Heart left ventricle (tissue), 16 donors: ENCODE measurements at regions of chr2 and their contacts with region 1.

Region 1: DNA sequence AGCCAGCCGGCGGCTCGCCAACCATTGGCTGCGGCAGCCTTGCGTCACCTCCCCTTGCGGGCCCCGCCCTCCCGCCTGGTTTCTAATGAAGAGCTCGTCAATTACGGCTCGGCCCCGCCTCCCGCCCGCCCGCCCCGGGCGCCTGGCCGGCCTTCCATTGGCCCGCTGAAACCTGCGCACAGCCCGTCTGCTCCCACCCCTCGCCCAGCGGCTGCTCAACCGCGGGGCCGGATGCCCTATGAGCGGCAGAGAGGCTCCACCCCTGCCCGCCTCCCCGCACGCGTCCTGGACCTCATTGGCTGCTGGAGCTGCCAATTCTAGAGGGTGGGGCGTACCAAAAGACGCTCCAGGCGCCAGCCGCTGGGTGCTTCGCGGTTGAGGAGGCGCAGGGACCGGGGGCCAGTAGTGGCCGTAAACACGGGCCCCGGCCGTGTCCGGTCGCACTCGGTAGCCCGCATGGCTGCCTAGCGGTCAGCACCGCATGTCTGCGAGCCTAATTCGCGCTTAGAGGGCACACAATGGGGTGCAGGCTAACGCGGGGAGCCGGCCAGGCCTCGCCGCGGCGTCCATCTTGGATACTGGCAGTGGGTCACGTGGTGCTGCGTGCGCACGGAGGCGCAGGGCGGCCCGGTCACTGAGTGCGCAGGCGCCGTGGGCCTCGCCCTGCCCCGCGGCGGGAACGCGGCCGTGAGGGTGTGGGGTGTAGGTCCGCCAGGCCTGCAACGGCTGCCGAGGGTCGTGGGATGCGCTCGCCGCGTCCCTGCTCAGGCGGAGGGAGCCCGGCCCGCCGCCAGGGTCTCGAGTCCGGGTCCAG is 454 bp upstream of the HDAC4 start:
- DNase-seq: peak; percentile 99 to 100 (median 99)
- ATAC-seq: peak; percentile 97 to 98 (median 98)
- H3K4me3 ChIP-seq: peak overlapping the region; percentile 32 to 91 (median 74)
- H3K27ac ChIP-seq: peak overlapping the region; percentile 94 to 100 (median 99)
- H3K4me1 ChIP-seq: peaks cover 0 to 42% (median 24%) of the 10 kb centered on the region in 12 donors
- H3K27me3 ChIP-seq: no peaks in the 10 kb centered on the region
- CTCF ChIP-seq: no peak
- POLR2A ChIP-seq: peak; percentile 31 to 94

Region 2: GRCh38 chr2:239035361-239036078 is 365.8 kb before region 1 on chr2:
- intact Hi-C with region 1: loop called in 2 of 10 experiments (anchors 2 to 10 kb)
- DNase-seq: peak in 4 of 5 donors; percentile 33 to 81 (median 44)
- ATAC-seq: peak in 3 of 4 donors; percentile 79 to 91 (median 84)
- H3K4me3 ChIP-seq: no peak overlapping the region
- H3K27ac ChIP-seq: no peak overlapping the region
- H3K4me1 ChIP-seq: peaks cover 0 to 5% (median 0%) of the 10 kb centered on the region in 12 donors
- H3K27me3 ChIP-seq: peaks cover 0 to 18% (median 0%) of the 10 kb centered on the region in 9 donors
- CTCF ChIP-seq: peak; percentile 80 to 93 (median 89)
- POLR2A ChIP-seq: no peak

Region 3: GRCh38 chr2:239157771-239158170 is 243.5 kb before region 1 on chr2:
- intact Hi-C with region 1: loop called in 1 of 10 experiments (anchors 10 kb)
- DNase-seq: peak in 3 of 5 donors; percentile 16 to 60 (median 18)
- ATAC-seq: peak in 2 of 4 donors; percentile 28 to 50
- H3K4me3 ChIP-seq: no peak overlapping the region
- H3K27ac ChIP-seq: no peak overlapping the region
- H3K4me1 ChIP-seq: peaks cover 0 to 9% (median 0%) of the 10 kb centered on the region in 12 donors
- H3K27me3 ChIP-seq: no peaks in the 10 kb centered on the region
- CTCF ChIP-seq: no peak
- POLR2A ChIP-seq: no peak

Region 4: DNA sequence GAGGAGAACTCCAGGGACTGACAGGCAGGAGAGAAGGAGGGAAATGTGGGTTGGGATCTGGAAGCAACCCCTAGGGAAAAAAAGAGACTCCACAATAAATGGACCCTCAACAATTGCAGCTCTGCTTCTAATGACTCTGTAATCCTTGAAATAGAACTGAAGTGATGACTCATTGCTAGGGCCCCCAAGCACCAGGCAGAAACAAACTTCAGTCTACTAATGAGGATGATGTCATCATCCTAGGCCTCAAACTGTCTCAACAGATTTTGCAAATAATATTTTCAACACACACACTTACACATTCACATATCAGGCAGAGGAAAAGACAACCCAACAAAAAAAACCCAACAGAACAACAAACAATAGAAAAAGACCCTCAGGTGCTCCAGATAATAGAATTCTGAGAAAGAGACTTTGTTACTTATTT is 143.8 kb before region 1 on chr2:
- intact Hi-C with region 1: loop called in 1 of 10 experiments (anchors 10 kb)
- DNase-seq: peak in 1 of 5 donors; percentile 14
- ATAC-seq: peak in 2 of 4 donors; percentile 46 to 56
- H3K4me3 ChIP-seq: no peak overlapping the region
- H3K27ac ChIP-seq: peak overlapping the region in 5 of 12 donors; percentile 20 to 88 (median 48)
- H3K4me1 ChIP-seq: peaks cover 0 to 98% (median 28%) of the 10 kb centered on the region in 12 donors
- H3K27me3 ChIP-seq: no peaks in the 10 kb centered on the region
- CTCF ChIP-seq: no peak
- POLR2A ChIP-seq: no peak

Region 5: DNA sequence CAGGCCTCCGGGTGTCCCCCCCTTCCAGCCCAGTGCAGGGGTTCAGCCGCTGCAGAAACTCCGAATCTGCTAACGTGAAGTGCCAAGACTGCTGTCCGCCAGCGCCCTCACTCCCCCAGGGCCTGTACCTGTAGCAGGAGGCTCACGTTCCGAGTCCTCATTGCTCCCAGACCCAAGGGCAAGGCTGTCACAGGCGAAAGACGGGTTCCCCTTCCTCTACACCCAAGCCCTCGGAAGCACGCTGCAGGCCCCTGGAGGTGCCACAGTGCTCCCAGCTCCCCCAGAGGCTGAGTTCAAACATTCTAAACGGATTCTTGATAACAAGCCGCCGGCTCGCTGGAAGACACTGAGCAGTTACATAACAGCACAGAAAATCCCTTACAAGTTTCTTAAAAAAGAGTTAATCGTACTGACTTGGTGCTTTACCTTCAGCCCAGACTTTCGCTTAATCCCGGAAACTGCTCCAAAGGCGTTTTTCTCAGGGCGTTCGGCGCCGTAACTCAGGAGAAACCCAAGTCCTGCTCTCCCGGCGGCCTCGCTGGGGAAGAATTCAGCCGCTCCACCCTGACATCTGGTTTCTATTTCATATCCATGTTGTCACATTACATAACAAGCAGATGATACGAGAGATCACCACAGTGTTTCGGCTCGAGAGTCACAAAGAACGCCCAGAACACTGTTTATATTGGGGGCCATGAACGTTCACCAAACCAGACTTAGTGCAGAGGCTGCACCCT is 92.4 kb before region 1 on chr2:
- intact Hi-C with region 1: loop called in 1 of 10 experiments (anchors 5 kb)
- DNase-seq: peak in 1 of 5 donors; percentile 61
- ATAC-seq: peak; percentile 19 to 52 (median 30)
- H3K4me3 ChIP-seq: peak overlapping the region; percentile 10 to 63 (median 51)
- H3K27ac ChIP-seq: peak overlapping the region; percentile 78 to 91 (median 85)
- H3K4me1 ChIP-seq: peaks cover 6 to 96% (median 71%) of the 10 kb centered on the region in 12 donors
- H3K27me3 ChIP-seq: no peaks in the 10 kb centered on the region
- CTCF ChIP-seq: peak in 5 of 12 donors; percentile 0 to 39 (median 16)
- POLR2A ChIP-seq: no peak

Region 6: GRCh38 chr2:239326831-239327535 is 74.3 kb before region 1 on chr2:
- intact Hi-C with region 1: loop called in 5 of 10 experiments (anchors 2 to 10 kb)
- DNase-seq: peak in 1 of 5 donors; percentile 16
- ATAC-seq: no peak
- H3K4me3 ChIP-seq: no peak overlapping the region
- H3K27ac ChIP-seq: peak overlapping the region in 11 of 12 donors; percentile 80 to 99 (median 91)
- H3K4me1 ChIP-seq: peaks cover 0 to 72% (median 53%) of the 10 kb centered on the region in 12 donors
- H3K27me3 ChIP-seq: no peaks in the 10 kb centered on the region
- CTCF ChIP-seq: no peak
- POLR2A ChIP-seq: no peak

Region 7: GRCh38 chr2:239461291-239462190 is 60.3 kb after region 1 on chr2:
- intact Hi-C with region 1: no loop called
- DNase-seq: no peak
- ATAC-seq: no peak
- H3K4me3 ChIP-seq: no peak overlapping the region
- H3K27ac ChIP-seq: no peak overlapping the region
- H3K4me1 ChIP-seq: peaks cover 0 to 23% (median 0%) of the 10 kb centered on the region in 12 donors
- H3K27me3 ChIP-seq: peaks cover 0 to 4% (median 0%) of the 10 kb centered on the region in 9 donors
- CTCF ChIP-seq: no peak
- POLR2A ChIP-seq: no peak

Region 8: DNA sequence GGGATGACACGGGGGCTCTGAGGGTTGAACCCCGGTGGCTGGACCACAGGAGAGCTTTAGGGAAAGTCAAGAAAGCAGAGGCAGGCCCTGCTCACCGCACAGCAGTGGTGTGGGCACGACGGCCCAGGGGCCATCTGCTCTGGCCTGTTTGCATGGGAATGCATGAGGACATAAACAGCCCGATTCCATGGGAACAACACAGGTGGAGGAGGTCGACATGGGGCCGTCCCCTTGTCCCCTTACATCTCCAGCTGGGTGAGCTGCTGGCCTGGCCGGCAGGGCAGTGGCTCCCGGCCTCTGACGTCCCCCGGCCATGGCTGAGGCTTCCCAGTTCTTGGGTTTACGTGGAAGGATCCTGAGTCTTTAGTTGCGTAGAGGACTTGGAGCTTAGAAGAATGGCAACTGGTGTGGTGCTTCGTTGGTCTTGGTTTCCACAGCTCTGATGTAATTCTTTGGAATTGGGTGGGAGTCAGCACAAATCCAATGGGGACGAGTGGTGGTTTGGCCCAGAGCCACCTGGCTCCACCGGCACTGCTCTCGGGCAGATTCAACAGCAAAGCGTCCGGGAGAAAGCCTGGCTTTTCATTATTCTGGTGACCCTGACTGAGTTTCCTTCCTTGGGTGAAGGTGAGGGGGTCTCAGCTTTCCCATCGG is 97.8 kb after region 1 on chr2:
- intact Hi-C with region 1: no loop called
- DNase-seq: peak; percentile 35 to 79 (median 63)
- ATAC-seq: peak in 3 of 4 donors; percentile 23 to 83 (median 58)
- H3K4me3 ChIP-seq: no peak overlapping the region
- H3K27ac ChIP-seq: peak overlapping the region in 1 of 12 donors; percentile 77
- H3K4me1 ChIP-seq: peaks cover 0 to 24% (median 9%) of the 10 kb centered on the region in 12 donors
- H3K27me3 ChIP-seq: peaks cover 0 to 10% (median 0%) of the 10 kb centered on the region in 9 donors
- CTCF ChIP-seq: no peak
- POLR2A ChIP-seq: no peak